ENCODE measurements at regions of chr11 and their contacts with region 1.

Region 1: DNA sequence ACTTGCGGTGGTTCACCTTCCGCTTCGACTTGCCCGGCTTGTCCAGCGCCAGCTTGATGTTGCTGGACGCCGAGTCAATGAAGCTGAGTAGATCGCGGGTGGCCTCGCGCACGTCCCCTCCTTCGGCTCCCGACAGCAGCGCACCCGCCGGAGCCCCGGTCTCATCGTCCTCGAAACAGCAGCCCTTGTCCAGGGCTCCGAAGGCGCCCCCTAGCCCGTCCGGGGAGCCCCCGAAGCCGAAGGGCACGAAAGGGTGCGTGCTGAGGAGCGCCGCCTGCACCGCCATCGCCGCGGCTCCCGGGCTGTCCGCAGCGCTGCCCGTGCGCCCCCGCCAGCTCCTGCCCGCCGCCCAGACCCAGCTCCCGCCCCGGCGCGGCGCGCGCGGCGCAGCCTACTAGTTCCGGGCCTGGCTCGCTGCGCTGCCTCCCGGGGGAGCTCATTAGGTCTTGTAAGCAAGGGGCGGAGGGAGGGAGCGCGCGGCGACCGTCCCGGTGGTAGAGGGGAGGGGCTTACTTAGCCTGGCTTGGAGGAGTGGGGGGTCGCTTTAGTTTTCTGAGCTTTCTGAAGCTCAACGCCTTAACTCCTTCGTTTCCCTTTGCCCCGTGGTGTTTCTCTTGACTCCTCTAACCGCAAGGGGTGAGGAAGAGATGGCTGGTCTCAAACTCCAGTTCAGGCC is at the start of gene FAM181B:
- DNase-seq: peak in 3 of 5 donors; percentile 17 to 26 (median 19)
- H3K4me3 ChIP-seq: peak within 1 kb of the TSS in 1 of 2 donors; percentile 36
- H3K4me3 Mint-ChIP-seq: peak within 1 kb of the TSS; percentile 62 to 84 (median 76)
- H3K27ac ChIP-seq: no peak within 1 kb of the TSS
- H3K27ac Mint-ChIP-seq: no peak within 1 kb of the TSS
- H3K4me1 ChIP-seq: peaks cover 9% of the 10 kb centered on the region
- H3K4me1 Mint-ChIP-seq: peaks cover 2 to 28% (median 13%) of the 10 kb centered on the region in 4 donors
- H3K27me3 ChIP-seq: peaks cover 35% of the 10 kb centered on the region
- H3K27me3 Mint-ChIP-seq: peaks cover 47 to 59% of the 10 kb centered on the region in 2 donors
- total RNA-seq, gene FAM181B: 0.11 TPM in 1 of 2 experiments, not detected in the other

Region 2: GRCh38 chr11:82718307-82718706 is 15.3 kb before region 1 on chr11:
- CTCF ChIA-PET with region 1: interaction called, 10 read pairs
- POLR2A ChIA-PET with region 1: no interaction called
- intact Hi-C with region 1: no loop called
- DNase-seq: peak in 2 of 5 donors; percentile 15 to 29
- H3K4me3 ChIP-seq: no peak overlapping the region
- H3K4me3 Mint-ChIP-seq: no peak overlapping the region
- H3K27ac ChIP-seq: no peak overlapping the region
- H3K27ac Mint-ChIP-seq: no peak overlapping the region
- H3K4me1 ChIP-seq: no peaks in the 10 kb centered on the region
- H3K4me1 Mint-ChIP-seq: no peaks in the 10 kb centered on the region
- H3K27me3 ChIP-seq: no peaks in the 10 kb centered on the region
- H3K27me3 Mint-ChIP-seq: peaks cover under 1 to 2% of the 10 kb centered on the region in 2 donors

Region 3: GRCh38 chr11:82750643-82751139 is 17.1 kb after region 1 on chr11:
- CTCF ChIA-PET with region 1: no interaction called
- POLR2A ChIA-PET with region 1: no interaction called
- intact Hi-C with region 1: loop called (anchors 2 kb)
- DNase-seq: peak; percentile 24 to 41 (median 28)
- H3K4me3 ChIP-seq: no peak overlapping the region
- H3K4me3 Mint-ChIP-seq: peak overlapping the region; percentile 42 to 82 (median 69)
- H3K27ac ChIP-seq: no peak overlapping the region
- H3K27ac Mint-ChIP-seq: peak overlapping the region in 6 of 7 donors; percentile 6 to 72 (median 24)
- H3K4me1 ChIP-seq: peaks cover 20% of the 10 kb centered on the region
- H3K4me1 Mint-ChIP-seq: peaks cover 16 to 23% (median 20%) of the 10 kb centered on the region in 4 donors
- H3K27me3 ChIP-seq: no peaks in the 10 kb centered on the region
- H3K27me3 Mint-ChIP-seq: peaks cover 2 to 5% of the 10 kb centered on the region in 2 donors

Region 4: GRCh38 chr11:82823647-82824619 is 90.4 kb after region 1 on chr11:
- CTCF ChIA-PET with region 1: no interaction called
- POLR2A ChIA-PET with region 1: no interaction called
- intact Hi-C with region 1: no loop called
- DNase-seq: no peak
- H3K4me3 ChIP-seq: no peak overlapping the region
- H3K4me3 Mint-ChIP-seq: no peak overlapping the region
- H3K27ac ChIP-seq: no peak overlapping the region
- H3K27ac Mint-ChIP-seq: no peak overlapping the region
- H3K4me1 ChIP-seq: no peaks in the 10 kb centered on the region
- H3K4me1 Mint-ChIP-seq: no peaks in the 10 kb centered on the region
- H3K27me3 ChIP-seq: no peaks in the 10 kb centered on the region
- H3K27me3 Mint-ChIP-seq: no peaks in the 10 kb centered on the region

Region 5: DNA sequence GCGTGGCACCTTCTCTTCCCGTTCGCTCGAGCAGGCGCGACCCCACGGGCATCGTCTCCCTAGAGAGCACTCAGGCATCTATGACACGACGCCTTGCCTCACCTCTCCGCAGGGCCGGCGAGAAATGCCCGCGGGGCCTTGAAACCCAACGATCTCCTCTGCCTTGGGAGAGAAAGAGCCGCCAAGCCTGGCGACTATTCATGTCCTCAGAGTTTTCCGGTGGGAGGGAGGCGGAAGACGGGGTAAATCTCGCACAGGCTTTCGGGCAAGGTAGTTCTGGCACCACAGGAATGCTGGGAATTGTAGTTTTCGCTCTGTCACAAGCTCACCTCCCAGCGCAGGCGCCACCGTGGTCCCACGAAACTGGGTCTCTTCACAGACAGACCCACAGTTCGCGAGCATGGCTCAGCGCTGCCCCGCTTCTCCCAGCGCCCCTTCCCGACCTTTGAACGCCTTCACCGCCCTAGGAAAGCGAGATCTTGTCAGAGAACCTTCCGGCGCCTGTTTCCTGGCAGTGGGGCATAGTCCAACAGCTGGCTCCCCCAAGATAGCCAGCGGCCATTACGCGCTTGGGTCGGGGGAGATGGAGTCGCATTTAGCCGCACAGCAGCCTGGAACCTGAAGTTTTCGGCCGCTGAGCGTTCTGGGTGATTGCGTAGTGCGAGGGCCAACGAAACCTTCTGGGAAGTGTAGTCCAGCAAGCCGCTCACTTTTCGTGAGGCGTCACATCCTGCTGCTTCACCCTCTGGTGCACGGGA is 552.4 kb after region 1 on chr11 and contains the start of gene CCDC90B:
- CTCF ChIA-PET with region 1: no interaction called
- POLR2A ChIA-PET with region 1: no interaction called
- intact Hi-C with region 1: loop called (anchors 2 kb)
- DNase-seq: peak; percentile 95 to 97 (median 97)
- H3K4me3 ChIP-seq: peak within 1 kb of the TSS; percentile 89 to 92
- H3K4me3 Mint-ChIP-seq: peak within 1 kb of the TSS; percentile 94 to 99 (median 98)
- H3K27ac ChIP-seq: peak within 1 kb of the TSS; percentile 95
- H3K27ac Mint-ChIP-seq: peak within 1 kb of the TSS; percentile 98 to 100 (median 100)
- H3K4me1 ChIP-seq: peaks cover 42% of the 10 kb centered on the region
- H3K4me1 Mint-ChIP-seq: peaks cover 26 to 46% (median 34%) of the 10 kb centered on the region in 4 donors
- H3K27me3 ChIP-seq: no peaks in the 10 kb centered on the region
- H3K27me3 Mint-ChIP-seq: no peaks in the 10 kb centered on the region
- total RNA-seq, gene CCDC90B: 37.6 to 38.0 TPM